ENCODE measurements at regions of chr2 and their contacts with region 1.

Region 1: GRCh38 chr2:100610381-100610831 is 47.6 kb downstream of the PDCL3 start:
- DNase-seq: peak; percentile 72 to 88 (median 79)
- ATAC-seq: peak; percentile 95
- H3K4me3 ChIP-seq: no peak overlapping the region
- H3K4me3 Mint-ChIP-seq: no peak overlapping the region
- H3K27ac ChIP-seq: no peak overlapping the region
- H3K27ac Mint-ChIP-seq: no peak overlapping the region
- H3K4me1 ChIP-seq: no peaks in the 10 kb centered on the region
- H3K4me1 Mint-ChIP-seq: peaks cover 5% of the 10 kb centered on the region
- H3K27me3 ChIP-seq: no peaks in the 10 kb centered on the region
- H3K27me3 Mint-ChIP-seq: peaks cover 2% of the 10 kb centered on the region
- CTCF ChIP-seq: peak; percentile 75

Region 2: GRCh38 chr2:99380376-99381010 is 1229.9 kb before region 1 on chr2:
- CTCF ChIA-PET with region 1: no interaction called
- POLR2A ChIA-PET with region 1: no interaction called
- intact Hi-C with region 1: no loop called
- DNase-seq: no peak
- ATAC-seq: no peak
- H3K4me3 ChIP-seq: no peak overlapping the region
- H3K4me3 Mint-ChIP-seq: no peak overlapping the region
- H3K27ac ChIP-seq: no peak overlapping the region
- H3K27ac Mint-ChIP-seq: no peak overlapping the region
- H3K4me1 ChIP-seq: no peaks in the 10 kb centered on the region
- H3K4me1 Mint-ChIP-seq: no peaks in the 10 kb centered on the region
- H3K27me3 ChIP-seq: no peaks in the 10 kb centered on the region
- H3K27me3 Mint-ChIP-seq: no peaks in the 10 kb centered on the region
- CTCF ChIP-seq: no peak

Region 3: DNA sequence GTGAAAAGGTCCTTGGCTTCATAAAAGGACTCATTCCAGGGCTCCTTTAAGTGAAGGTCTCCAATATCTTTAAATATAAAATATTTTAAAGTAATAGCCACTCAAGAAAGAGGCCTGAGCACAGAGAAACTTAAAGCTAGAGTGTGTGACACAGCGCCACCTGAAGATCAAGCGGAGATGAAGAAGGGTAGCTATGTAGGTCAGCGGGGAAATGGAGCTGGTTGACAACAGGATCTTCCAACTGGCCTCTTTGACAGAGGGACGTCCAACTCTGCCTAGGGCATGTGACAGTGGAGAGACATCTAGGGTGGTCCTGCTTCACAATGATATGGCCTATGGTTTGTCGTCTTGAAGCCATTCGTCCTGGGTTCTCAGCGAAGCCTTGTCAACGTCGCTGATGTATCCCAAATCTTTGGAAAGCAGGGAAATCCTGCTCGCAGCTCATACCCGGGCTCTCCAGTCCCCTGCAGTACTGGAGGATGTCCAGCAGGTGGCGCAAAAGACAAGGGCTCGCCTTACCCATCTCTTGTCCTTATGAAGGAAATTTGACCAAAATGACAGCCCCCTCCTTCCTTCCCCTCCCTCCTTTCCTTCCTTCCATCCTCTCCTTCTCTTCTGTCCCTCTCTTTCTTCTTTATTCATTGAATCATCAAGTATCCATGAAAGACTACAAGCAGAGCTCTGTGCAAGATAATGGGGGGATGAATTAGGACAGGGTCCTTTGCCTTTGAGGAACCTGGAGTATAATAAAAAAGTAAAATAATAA is 347.7 kb before region 1 on chr2:
- CTCF ChIA-PET with region 1: no interaction called
- POLR2A ChIA-PET with region 1: no interaction called
- intact Hi-C with region 1: loop called in 1 of 2 experiments (anchors 10 kb)
- DNase-seq: peak; percentile 16 to 73 (median 54)
- ATAC-seq: peak; percentile 70
- H3K4me3 ChIP-seq: no peak overlapping the region
- H3K4me3 Mint-ChIP-seq: no peak overlapping the region
- H3K27ac ChIP-seq: no peak overlapping the region
- H3K27ac Mint-ChIP-seq: no peak overlapping the region
- H3K4me1 ChIP-seq: no peaks in the 10 kb centered on the region
- H3K4me1 Mint-ChIP-seq: peaks cover 2% of the 10 kb centered on the region
- H3K27me3 ChIP-seq: no peaks in the 10 kb centered on the region
- H3K27me3 Mint-ChIP-seq: no peaks in the 10 kb centered on the region
- CTCF ChIP-seq: peak; percentile 91

Region 4: GRCh38 chr2:100548771-100549170 is 61.6 kb before region 1 on chr2:
- CTCF ChIA-PET with region 1: no interaction called
- POLR2A ChIA-PET with region 1: no interaction called
- intact Hi-C with region 1: no loop called
- DNase-seq: no peak
- ATAC-seq: no peak
- H3K4me3 ChIP-seq: no peak overlapping the region
- H3K4me3 Mint-ChIP-seq: no peak overlapping the region
- H3K27ac ChIP-seq: no peak overlapping the region
- H3K27ac Mint-ChIP-seq: no peak overlapping the region
- H3K4me1 ChIP-seq: no peaks in the 10 kb centered on the region
- H3K4me1 Mint-ChIP-seq: peaks cover 2% of the 10 kb centered on the region
- H3K27me3 ChIP-seq: no peaks in the 10 kb centered on the region
- H3K27me3 Mint-ChIP-seq: peaks cover 6% of the 10 kb centered on the region
- CTCF ChIP-seq: no peak

Region 5: GRCh38 chr2:100580367-100581276 is 29.8 kb before region 1 on chr2:
- CTCF ChIA-PET with region 1: interaction called, 7 read pairs
- POLR2A ChIA-PET with region 1: no interaction called
- intact Hi-C with region 1: loop called (anchors 2 kb)
- DNase-seq: peak; percentile 37 to 91 (median 65)
- ATAC-seq: peak; percentile 77
- H3K4me3 ChIP-seq: peak overlapping the region; percentile 27 to 34
- H3K4me3 Mint-ChIP-seq: peak overlapping the region; percentile 68
- H3K27ac ChIP-seq: peak overlapping the region; percentile 75 to 87
- H3K27ac Mint-ChIP-seq: peak overlapping the region; percentile 99
- H3K4me1 ChIP-seq: peaks cover 35% of the 10 kb centered on the region
- H3K4me1 Mint-ChIP-seq: peaks cover 39% of the 10 kb centered on the region
- H3K27me3 ChIP-seq: no peaks in the 10 kb centered on the region
- H3K27me3 Mint-ChIP-seq: no peaks in the 10 kb centered on the region
- CTCF ChIP-seq: no peak

Region 6: GRCh38 chr2:100630473-100630977 is 20.1 kb after region 1 on chr2:
- CTCF ChIA-PET with region 1: interaction called, 24 read pairs
- POLR2A ChIA-PET with region 1: no interaction called
- intact Hi-C with region 1: no loop called
- DNase-seq: peak in 1 of 9 experiments; percentile 21
- ATAC-seq: peak; percentile 36
- H3K4me3 ChIP-seq: no peak overlapping the region
- H3K4me3 Mint-ChIP-seq: no peak overlapping the region
- H3K27ac ChIP-seq: no peak overlapping the region
- H3K27ac Mint-ChIP-seq: peak overlapping the region; percentile 58
- H3K4me1 ChIP-seq: peaks cover 13% of the 10 kb centered on the region
- H3K4me1 Mint-ChIP-seq: peaks cover 31% of the 10 kb centered on the region
- H3K27me3 ChIP-seq: no peaks in the 10 kb centered on the region
- H3K27me3 Mint-ChIP-seq: no peaks in the 10 kb centered on the region
- CTCF ChIP-seq: no peak

Region 7: GRCh38 chr2:100660851-100661584 is 50.6 kb after region 1 on chr2:
- CTCF ChIA-PET with region 1: interaction called, 11 read pairs
- POLR2A ChIA-PET with region 1: no interaction called
- intact Hi-C with region 1: no loop called
- DNase-seq: no peak
- ATAC-seq: no peak
- H3K4me3 ChIP-seq: no peak overlapping the region
- H3K4me3 Mint-ChIP-seq: no peak overlapping the region
- H3K27ac ChIP-seq: no peak overlapping the region
- H3K27ac Mint-ChIP-seq: no peak overlapping the region
- H3K4me1 ChIP-seq: no peaks in the 10 kb centered on the region
- H3K4me1 Mint-ChIP-seq: peaks cover 2% of the 10 kb centered on the region
- H3K27me3 ChIP-seq: peaks cover 0 to 3% of the 10 kb centered on the region in 2 experiments
- H3K27me3 Mint-ChIP-seq: no peaks in the 10 kb centered on the region
- CTCF ChIP-seq: no peak

Region 8: GRCh38 chr2:100793982-100794381 is 183.6 kb after region 1 on chr2:
- CTCF ChIA-PET with region 1: no interaction called
- POLR2A ChIA-PET with region 1: no interaction called
- intact Hi-C with region 1: no loop called
- DNase-seq: no peak
- ATAC-seq: no peak
- H3K4me3 ChIP-seq: no peak overlapping the region
- H3K4me3 Mint-ChIP-seq: no peak overlapping the region
- H3K27ac ChIP-seq: no peak overlapping the region
- H3K27ac Mint-ChIP-seq: no peak overlapping the region
- H3K4me1 ChIP-seq: no peaks in the 10 kb centered on the region
- H3K4me1 Mint-ChIP-seq: peaks cover 2% of the 10 kb centered on the region
- H3K27me3 ChIP-seq: no peaks in the 10 kb centered on the region
- H3K27me3 Mint-ChIP-seq: no peaks in the 10 kb centered on the region
- CTCF ChIP-seq: no peak

Region 9: GRCh38 chr2:100813527-100813926 is 203.1 kb after region 1 on chr2:
- CTCF ChIA-PET with region 1: interaction called, 4 read pairs
- POLR2A ChIA-PET with region 1: no interaction called
- intact Hi-C with region 1: loop called (anchors 1 to 10 kb)
- DNase-seq: peak in 1 of 9 experiments; percentile 25
- ATAC-seq: peak; percentile 51
- H3K4me3 ChIP-seq: no peak overlapping the region
- H3K4me3 Mint-ChIP-seq: no peak overlapping the region
- H3K27ac ChIP-seq: no peak overlapping the region
- H3K27ac Mint-ChIP-seq: peak overlapping the region; percentile 39
- H3K4me1 ChIP-seq: peaks cover 37% of the 10 kb centered on the region
- H3K4me1 Mint-ChIP-seq: peaks cover 41% of the 10 kb centered on the region
- H3K27me3 ChIP-seq: no peaks in the 10 kb centered on the region
- H3K27me3 Mint-ChIP-seq: no peaks in the 10 kb centered on the region
- CTCF ChIP-seq: no peak

Region 10: GRCh38 chr2:100978582-100979191 is 368.3 kb after region 1 on chr2:
- CTCF ChIA-PET with region 1: interaction called, 82 read pairs
- POLR2A ChIA-PET with region 1: no interaction called
- intact Hi-C with region 1: no loop called
- DNase-seq: no peak
- ATAC-seq: no peak
- H3K4me3 ChIP-seq: no peak overlapping the region
- H3K4me3 Mint-ChIP-seq: no peak overlapping the region
- H3K27ac ChIP-seq: no peak overlapping the region
- H3K27ac Mint-ChIP-seq: no peak overlapping the region
- H3K4me1 ChIP-seq: no peaks in the 10 kb centered on the region
- H3K4me1 Mint-ChIP-seq: no peaks in the 10 kb centered on the region
- H3K27me3 ChIP-seq: no peaks in the 10 kb centered on the region
- H3K27me3 Mint-ChIP-seq: no peaks in the 10 kb centered on the region
- CTCF ChIP-seq: no peak

Measured in CD8-positive, alpha-beta T cell (primary cell).